ENCODE measurements at regions of chr5 and their contacts with region 1.

Region 1: DNA sequence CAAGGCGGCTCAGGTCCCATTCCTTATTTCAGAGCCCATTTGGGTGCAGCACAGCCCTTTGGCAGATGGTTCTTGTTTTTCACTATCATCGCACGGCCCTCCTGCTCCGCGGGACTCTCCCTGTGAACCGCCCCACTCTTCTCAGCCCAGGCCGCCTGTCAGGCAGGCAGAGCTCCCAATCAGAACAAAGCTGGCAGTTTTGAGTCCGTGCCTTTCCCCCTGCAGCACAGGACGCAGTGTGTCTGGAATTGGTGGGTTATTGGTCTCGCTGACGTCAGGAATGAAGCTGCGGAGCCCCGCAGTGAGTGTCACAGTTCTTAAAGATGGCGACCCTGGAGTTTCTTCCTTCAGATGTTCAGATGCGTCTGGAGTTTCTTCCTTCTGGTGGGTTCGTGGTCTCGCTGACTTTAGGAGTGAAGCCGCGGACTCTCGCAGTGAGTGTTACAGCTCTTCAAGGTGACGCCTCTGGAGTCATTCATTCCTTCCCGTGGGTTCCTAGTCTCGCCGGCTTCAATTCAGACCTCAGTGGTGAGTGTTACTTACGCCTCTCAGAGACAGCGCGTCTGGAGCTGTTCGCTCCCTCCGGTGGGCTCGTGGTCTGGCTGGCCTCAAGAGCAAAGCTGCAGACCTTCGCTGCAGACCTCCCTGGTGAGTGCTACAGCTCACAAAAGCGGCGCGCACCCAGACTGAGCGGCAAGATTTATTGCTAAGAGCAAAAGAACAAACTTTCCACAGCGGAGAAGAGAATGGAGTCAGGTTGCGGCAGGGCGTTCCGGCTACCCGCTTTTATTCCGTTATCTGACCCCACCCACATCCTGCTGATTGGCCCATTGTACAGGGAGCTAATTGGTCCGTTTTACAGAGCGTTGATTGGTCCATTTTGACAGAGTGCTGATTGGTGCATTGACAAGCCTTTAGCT is 7.5 kb downstream of the ZDHHC11B start:
- DNase-seq: peak; percentile 68 to 80 (median 73)
- ATAC-seq: no peak
- H3K4me3 ChIP-seq: no peak overlapping the region
- H3K27ac ChIP-seq: no peak overlapping the region
- H3K4me1 ChIP-seq: no peaks in the 10 kb centered on the region
- H3K27me3 ChIP-seq: no peaks in the 10 kb centered on the region

Region 2: DNA sequence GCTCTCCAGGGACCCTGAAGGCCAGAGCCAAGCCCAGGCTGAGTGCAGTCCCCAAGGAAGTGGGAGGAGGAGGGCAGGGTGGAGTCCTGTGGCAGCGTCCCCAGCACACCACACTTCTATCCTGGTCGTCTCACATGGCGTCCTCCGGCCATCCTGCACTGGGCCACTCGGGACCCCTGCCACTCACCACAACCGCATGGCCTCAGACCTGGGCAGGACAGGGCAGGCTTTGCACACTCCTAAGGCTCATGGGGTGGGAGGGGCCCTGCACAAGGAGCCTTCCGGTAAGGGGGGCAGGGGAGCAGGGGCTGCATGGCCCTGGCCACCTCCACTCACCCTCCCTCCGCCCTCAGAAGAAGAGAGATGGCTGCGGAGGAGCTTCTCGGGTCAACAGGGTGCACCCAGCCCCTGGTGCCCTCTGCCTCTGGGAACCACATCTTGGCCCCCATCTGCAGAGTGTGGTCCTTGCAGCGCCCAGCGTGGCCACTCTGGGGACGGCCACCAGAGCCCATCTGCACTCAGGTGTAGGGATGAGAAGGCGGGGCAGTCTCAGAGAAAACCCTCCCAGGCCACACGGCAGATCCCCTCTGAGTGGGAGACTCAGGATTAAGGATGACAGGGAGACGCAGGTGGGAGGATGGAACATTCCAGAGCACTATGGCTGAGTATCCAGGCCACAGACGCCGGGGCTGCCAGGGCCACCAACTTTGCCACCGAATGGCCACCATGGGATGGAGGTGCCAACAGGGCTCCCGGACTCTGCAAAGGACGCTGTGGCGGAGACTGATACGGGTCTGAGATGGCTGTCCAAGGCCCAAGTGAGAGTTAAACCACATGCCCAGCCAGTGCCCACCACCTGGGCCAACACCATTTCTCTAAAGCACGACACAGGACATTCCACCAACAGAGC is 91.5 kb before region 1 on chr5:
- intact Hi-C with region 1: loop called in 2 of 4 experiments (anchors 5 to 10 kb)
- DNase-seq: peak; percentile 20 to 39 (median 38)
- ATAC-seq: no peak
- H3K4me3 ChIP-seq: no peak overlapping the region
- H3K27ac ChIP-seq: no peak overlapping the region
- H3K4me1 ChIP-seq: no peaks in the 10 kb centered on the region
- H3K27me3 ChIP-seq: no peaks in the 10 kb centered on the region

Region 3: DNA sequence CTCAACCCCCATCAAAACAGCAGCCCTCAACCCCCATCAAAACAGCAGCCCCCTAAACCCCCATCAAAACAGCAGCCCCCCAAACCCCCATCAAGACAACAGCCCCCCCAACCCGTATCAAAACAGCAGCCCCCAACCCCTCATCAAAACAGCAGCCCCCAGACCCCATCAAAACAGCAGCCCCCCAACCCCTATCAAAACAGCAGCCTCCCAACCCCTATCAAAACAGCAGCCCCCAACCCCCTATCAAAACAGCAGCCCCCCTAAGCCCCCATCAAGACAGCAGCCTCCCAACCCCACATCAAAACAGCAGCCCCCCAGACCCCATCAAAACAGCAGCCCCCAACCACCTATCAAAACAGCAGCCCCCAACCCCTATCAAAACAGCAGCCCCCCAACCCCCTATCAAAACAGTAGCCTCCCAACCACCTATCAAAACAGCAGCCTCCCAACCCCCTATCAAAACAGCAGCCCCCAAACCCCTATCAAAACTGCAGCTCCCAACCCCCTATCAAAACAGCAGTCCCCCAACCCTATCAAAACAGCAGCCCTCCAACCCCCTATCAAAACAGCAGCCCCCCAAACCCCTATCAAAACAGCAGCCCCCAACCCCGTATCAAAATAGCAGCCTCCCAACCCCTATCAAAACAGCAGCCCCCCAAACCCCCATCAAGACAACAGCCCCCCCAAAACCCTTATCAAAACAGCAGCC is 85.1 kb before region 1 on chr5:
- intact Hi-C with region 1: loop called in 2 of 4 experiments (anchors 5 to 10 kb)
- DNase-seq: peak in 1 of 3 donors; percentile 4
- ATAC-seq: no peak
- H3K4me3 ChIP-seq: peak overlapping the region; percentile 89
- H3K27ac ChIP-seq: peak overlapping the region; percentile 21
- H3K4me1 ChIP-seq: no peaks in the 10 kb centered on the region
- H3K27me3 ChIP-seq: no peaks in the 10 kb centered on the region

Region 4: DNA sequence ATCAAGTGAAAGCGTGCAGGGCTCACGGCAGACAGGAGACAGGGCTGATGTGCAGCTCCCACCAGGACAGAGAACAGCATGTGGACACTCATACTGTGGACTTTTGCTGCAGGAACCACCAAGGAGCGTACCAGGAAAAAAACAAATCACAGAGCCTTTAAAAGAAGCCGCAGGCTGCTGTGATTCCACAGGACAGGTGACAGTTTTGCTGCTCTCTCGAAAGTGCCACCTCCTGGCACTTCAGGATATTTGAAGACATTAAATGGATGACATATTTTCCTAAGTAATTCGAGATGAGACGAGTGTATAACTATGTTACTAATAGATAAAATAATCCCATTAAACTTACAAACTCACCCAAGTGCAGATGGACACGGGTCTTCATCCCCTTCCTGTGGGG is 44.5 kb after region 1 on chr5:
- intact Hi-C with region 1: no loop called
- DNase-seq: no peak
- ATAC-seq: no peak
- H3K4me3 ChIP-seq: no peak overlapping the region
- H3K27ac ChIP-seq: no peak overlapping the region
- H3K4me1 ChIP-seq: no peaks in the 10 kb centered on the region
- H3K27me3 ChIP-seq: no peaks in the 10 kb centered on the region

Region 5: GRCh38 chr5:1227669-1228068 is 450.6 kb after region 1 on chr5:
- intact Hi-C with region 1: no loop called
- DNase-seq: no peak
- ATAC-seq: no peak
- H3K4me3 ChIP-seq: no peak overlapping the region
- H3K27ac ChIP-seq: no peak overlapping the region
- H3K4me1 ChIP-seq: no peaks in the 10 kb centered on the region
- H3K27me3 ChIP-seq: no peaks in the 10 kb centered on the region

Measured in right cardiac atrium (tissue), 5 donors.